HAP-1 (cell line): ENCODE measurements at regions of chr15 and their contacts with region 1.

Region 1: DNA sequence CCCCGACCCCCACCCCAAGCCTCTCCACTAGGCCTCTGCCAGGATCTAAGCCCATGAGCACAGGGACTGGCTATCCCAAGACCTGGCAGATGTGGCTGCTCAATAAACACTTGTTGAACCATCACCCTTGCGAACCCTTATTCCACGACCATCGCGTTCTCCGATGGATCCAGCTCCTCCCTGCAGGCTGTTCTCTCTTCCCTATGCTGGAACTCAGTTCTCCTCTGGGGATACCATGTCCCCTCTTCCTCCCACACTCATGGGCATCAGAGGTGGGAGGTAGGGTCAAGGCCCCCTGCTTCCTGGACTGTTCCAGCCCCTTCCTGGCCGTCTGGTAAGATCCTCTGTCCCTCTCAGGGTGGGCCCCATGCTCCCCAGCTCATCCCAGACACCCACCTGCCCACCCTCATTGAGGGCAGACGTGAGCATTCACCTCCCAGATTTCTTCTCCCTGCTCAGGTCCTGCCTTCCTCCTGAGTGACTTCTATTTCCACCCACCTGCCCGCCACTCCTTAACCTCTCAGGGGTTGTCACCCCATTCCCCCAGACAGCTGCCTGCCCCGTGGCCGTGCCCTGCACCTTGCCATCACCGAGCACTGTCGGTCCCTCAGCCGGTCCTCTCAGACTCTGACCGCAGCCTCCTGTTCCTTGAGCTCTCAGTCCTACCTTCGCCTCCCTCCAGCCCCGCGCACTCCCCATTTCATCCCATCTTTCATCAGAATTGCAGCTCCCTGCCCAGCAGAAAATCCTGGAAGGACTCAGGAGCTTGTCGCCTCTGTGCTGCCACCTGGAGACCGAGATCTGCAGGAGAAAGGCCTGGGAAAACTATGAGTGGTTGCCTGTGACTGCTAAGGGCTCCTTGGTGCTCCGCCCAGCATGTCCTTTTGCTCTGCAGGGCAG is 42.0 kb downstream of the PML start:
- DNase-seq: peak; percentile 73 to 82
- H3K4me3 ChIP-seq: no peak overlapping the region
- H3K4me1 ChIP-seq: no peaks in the 10 kb centered on the region
- H3K27me3 ChIP-seq: no peaks in the 10 kb centered on the region

Region 2: DNA sequence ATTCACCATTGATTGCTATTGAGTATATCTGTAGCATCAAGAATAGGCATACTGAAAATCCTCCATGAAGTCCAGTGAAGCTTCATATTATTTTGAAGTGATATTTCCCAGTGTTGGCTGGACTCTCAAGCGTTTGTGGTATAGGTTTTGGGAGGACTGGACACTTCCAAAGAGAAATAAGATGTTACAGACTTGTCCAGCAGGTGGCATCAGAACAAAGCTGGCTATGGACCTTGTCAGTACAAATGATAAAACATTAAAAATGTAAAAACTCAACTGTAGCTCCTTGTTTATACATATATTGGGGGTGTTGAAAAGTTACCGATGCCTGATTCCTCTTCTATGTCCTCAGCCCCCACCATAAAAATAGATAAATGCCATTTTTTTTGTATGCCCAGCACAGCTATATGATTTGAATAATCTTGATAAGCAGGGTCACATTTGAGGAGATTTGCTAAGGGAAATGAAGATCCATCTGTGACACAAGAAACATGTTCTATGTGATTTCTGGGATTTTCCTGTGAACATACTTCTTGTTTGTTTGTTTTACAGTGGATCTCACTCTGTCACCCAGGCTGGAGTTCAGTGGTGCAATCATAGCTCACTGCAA is 1436.6 kb before region 1 on chr15:
- in situ Hi-C with region 1: loop called (anchors 25 kb)
- DNase-seq: peak; percentile 76 to 80
- H3K4me3 ChIP-seq: no peak overlapping the region
- H3K4me1 ChIP-seq: no peaks in the 10 kb centered on the region
- H3K27me3 ChIP-seq: no peaks in the 10 kb centered on the region

Region 3: GRCh38 chr15:73781038-73781925 is 255.2 kb before region 1 on chr15:
- in situ Hi-C with region 1: no loop called
- DNase-seq: peak in 1 of 2 experiments; percentile 34
- H3K4me3 ChIP-seq: no peak overlapping the region
- H3K4me1 ChIP-seq: peaks cover 2% of the 10 kb centered on the region; the same call in 1 of the 2 replicates
- H3K27me3 ChIP-seq: no peaks in the 10 kb centered on the region